CD14-positive monocyte (primary cell): ENCODE measurements at regions of chr7 and their contacts with region 1.

Region 1: GRCh38 chr7:63054191-63054661 is 944.4 kb upstream of the ZNF722 start:
- DNase-seq: no peak
- H3K4me3 ChIP-seq: no peak overlapping the region
- H3K4me3 Mint-ChIP-seq: no peak overlapping the region
- H3K27ac ChIP-seq: no peak overlapping the region
- H3K27ac Mint-ChIP-seq: no peak overlapping the region
- H3K4me1 ChIP-seq: no peaks in the 10 kb centered on the region
- H3K4me1 Mint-ChIP-seq: no peaks in the 10 kb centered on the region
- H3K27me3 ChIP-seq: no peaks in the 10 kb centered on the region
- H3K27me3 Mint-ChIP-seq: peaks cover 0 to 2% (median 1%) of the 10 kb centered on the region in 3 donors
- CTCF ChIP-seq: no peak

Region 2: DNA sequence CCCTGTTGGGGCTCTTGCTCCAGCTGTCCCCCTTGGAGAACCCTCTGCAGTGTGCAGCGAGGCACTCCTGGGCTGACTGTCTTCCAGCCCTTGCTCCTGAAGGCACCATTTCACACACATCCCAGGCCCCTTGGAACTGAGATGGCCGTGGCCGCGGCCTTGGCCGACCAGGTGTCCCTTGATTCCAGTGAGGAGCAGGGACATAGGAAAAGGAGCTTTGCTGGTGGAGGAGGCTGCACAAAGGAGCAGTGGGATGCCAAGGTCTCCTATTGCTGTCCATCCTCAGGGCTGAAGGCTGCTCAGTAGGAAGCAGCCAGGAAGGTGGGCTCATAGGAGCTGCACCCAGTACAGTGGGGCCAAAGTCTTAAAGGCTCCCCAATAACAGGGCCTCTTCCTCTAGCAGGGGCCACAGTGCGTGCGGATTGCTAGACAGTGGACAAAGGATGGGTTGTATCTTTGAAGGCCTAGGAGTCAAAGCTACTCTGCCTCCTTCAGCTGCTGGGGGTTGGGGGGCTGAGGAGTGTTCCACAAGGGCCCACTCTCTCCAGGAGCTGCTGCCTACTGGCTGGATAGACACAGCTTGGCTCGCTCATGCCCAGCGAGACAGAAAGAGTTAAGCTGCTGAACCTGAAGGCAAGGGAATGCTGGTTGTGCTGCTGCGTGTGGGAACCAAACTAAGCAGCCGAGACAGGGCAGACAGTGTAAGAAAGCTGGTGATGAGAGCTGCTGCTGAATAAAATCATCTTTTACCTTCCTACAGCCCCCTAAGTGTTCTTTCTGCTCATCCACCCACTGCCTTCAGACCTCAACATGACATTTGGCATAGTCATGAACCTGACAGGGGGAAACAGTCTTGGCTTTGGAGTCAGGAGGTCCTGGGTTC is 52.5 kb after region 1 on chr7:
- intact Hi-C with region 1: loop called in 1 of 2 experiments (anchors 10 kb)
- DNase-seq: no peak
- H3K4me3 ChIP-seq: no peak overlapping the region
- H3K4me3 Mint-ChIP-seq: no peak overlapping the region
- H3K27ac ChIP-seq: no peak overlapping the region
- H3K27ac Mint-ChIP-seq: no peak overlapping the region
- H3K4me1 ChIP-seq: no peaks in the 10 kb centered on the region
- H3K4me1 Mint-ChIP-seq: no peaks in the 10 kb centered on the region
- H3K27me3 ChIP-seq: no peaks in the 10 kb centered on the region
- H3K27me3 Mint-ChIP-seq: peaks cover 0 to 6% (median 0%) of the 10 kb centered on the region in 3 donors
- CTCF ChIP-seq: no peak